ENCODE measurements at regions of chr19 and their contacts with region 1.

Region 1: DNA sequence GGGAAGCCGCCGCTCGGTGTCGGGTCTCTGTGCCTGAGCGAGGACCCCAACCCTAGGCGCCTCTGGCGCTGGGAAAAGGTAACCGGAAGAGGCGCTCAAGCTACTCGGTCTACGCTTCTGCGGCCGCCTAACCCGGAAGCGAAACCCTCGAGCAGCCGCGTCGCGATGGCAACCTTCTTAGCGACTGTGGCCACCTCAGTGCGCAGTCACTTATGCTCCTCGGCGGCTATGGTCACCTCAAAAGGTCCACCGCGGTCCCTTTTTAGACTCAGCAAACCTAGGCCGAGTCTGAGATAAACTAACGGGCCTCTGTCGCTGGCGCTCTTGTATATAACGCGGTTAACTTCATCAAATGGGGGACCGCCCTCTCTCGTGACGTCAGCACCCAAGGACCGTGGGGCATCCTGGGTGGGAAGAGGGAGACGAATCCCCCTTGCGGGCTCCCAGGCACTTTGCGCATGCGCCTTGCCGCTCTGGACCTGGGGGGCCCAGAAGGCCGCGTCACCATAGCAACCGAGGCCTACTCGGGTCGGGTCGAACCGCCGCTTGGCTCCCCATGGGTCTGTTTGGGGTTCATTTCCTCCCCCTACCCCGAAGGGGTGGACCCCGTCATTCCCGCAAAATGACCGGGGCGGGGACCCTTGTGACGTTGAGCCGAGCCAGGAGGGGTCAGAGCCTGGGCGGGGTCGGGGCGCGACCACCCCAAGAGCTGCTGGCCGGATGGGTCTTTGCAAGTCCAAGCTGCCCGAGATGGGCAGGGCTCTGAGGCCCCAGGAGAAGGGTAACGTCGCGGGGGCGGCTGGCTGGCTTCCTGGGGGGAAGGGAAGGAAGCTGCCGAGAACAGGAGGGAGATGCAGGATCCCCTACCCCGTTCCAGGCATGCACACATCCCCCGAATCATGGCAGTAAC is at the start of gene GTF2F1:
- DNase-seq: peak; percentile 94
- H3K4me3 Mint-ChIP-seq: peak within 1 kb of the TSS; percentile 94
- H3K27ac Mint-ChIP-seq: peak within 1 kb of the TSS; percentile 93
- H3K4me1 Mint-ChIP-seq: peaks cover 24% of the 10 kb centered on the region
- H3K27me3 Mint-ChIP-seq: no peaks in the 10 kb centered on the region
- total RNA-seq, gene GTF2F1: 67.0 to 70.9 TPM

Region 2: DNA sequence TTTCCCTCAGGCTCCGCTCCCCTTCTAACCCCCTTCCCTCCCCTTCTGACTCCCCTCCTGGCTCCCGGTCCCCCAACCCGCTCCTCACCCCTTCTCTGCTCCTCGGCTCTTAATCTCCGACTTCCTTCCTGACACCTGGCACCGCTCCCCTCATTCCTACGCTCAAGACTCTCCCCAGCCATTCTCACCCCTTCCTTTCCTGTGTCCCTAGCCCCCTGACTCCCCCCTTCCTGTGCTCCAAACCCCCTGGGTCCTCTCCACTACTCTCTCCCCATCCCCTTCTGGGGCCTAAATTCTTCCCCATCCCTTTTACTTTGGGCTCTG is 31.3 kb before region 1 on chr19:
- CTCF ChIA-PET with region 1: no interaction called
- POLR2A ChIA-PET with region 1: interaction called, 3 read pairs
- intact Hi-C with region 1: loop called (anchors 1 kb)
- DNase-seq: no peak
- H3K4me3 Mint-ChIP-seq: peak overlapping the region; percentile 98
- H3K27ac Mint-ChIP-seq: peak overlapping the region; percentile 95
- H3K4me1 Mint-ChIP-seq: peaks cover 18% of the 10 kb centered on the region
- H3K27me3 Mint-ChIP-seq: no peaks in the 10 kb centered on the region